ENCODE measurements at regions of chr4 and their contacts with region 1.

Region 1: DNA sequence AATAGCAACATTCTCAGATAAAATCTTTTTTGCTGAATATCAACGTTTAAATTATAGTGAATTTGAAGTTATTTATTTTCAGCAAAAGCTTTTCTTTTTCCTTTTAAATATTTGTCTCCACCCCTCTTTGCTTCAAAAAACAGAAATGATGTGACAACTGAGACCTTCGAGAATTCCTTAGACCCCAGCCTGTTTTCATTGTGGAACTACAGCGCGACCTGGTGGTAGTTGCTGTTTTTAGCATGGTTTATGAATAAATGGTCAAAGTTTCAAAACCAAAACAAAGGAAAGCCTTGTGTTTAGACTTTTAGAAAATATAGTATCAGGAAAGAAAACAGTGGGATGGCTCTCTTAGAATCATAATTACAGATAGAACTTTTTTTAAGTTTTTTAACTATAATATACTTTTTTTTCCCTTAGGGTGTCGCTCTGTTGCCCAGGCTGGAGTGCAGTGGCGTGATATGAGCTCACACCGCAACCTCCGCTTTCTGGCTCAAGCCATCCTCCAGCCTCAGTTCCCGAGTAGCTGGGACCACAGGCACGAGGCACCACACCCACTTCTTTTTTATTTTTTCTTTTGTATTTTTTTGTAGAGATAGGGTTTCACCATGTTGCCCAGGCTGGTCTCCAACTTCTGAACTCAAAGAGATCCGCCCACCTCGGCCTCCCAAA is 26.8 kb upstream of the TMEM184C start:
- DNase-seq: peak; percentile 76
- H3K4me3 Mint-ChIP-seq: no peak overlapping the region
- H3K27ac Mint-ChIP-seq: no peak overlapping the region
- H3K4me1 Mint-ChIP-seq: peaks cover under 1% of the 10 kb centered on the region
- H3K27me3 Mint-ChIP-seq: no peaks in the 10 kb centered on the region
- CTCF ChIP-seq: peak; percentile 81

Region 2: DNA sequence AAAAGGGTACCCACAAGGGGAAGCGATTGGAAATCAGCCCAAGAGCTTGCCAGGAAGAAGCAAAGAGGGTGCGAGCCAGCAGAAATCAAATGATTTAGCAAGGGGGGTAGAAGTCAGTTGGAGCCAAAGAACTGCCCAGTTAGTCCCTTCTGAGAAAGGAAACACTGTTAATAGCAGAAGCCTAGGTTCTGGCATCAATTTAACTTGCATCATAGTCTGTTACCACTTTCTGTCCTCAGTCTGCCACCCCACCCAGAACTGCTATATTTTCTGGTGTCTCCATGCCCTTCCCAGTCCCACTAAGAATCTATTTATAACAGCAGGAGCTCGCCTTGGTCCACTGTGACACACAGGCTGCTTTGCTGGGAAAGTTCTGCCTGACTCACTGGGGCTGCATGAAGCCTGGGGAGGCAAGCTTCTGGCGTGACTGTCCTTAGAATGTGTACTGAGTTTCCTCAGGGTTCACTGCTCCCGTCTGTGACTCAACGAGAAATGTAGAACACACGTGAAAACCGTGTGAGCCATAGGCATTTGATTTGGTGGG is 486.9 kb before region 1 on chr4:
- CTCF ChIA-PET with region 1: interaction called, 10 read pairs
- POLR2A ChIA-PET with region 1: interaction called, 4 read pairs
- intact Hi-C with region 1: loop called (anchors 2 kb)
- DNase-seq: peak; percentile 92
- H3K4me3 Mint-ChIP-seq: peak overlapping the region; percentile 1
- H3K27ac Mint-ChIP-seq: peak overlapping the region; percentile 97
- H3K4me1 Mint-ChIP-seq: peaks cover 18% of the 10 kb centered on the region
- H3K27me3 Mint-ChIP-seq: no peaks in the 10 kb centered on the region
- CTCF ChIP-seq: no peak

Region 3: DNA sequence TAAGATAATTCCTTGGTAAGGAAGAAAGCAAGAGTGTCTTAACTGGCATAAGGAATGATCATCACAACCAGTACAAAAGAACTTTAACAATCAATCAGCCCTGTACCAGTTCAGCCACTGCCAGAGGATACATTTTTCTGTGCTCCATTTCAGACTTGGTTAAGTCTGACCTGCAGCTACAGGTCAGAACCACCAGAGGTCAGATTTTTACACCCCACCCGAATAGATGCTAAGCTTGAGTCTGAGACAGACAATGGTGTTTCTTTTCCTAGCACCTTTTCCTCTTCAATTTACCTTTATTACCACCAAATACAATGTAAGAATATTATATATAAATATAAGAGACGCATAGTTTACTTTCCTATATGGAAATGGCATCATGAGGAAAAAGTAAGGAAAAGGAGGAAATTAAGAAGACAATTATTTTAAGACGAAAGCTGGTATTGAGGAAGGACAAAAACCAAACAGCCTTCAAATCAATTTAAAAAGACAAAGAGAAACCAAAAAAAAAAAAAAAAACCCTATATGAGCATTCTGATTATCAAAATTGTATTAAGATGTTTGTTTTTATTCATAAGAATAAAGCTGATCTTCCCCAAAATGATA is 429.4 kb before region 1 on chr4:
- CTCF ChIA-PET with region 1: interaction called, 67 read pairs
- POLR2A ChIA-PET with region 1: interaction called, 4 read pairs
- intact Hi-C with region 1: loop called (anchors 1 kb)
- DNase-seq: peak; percentile 63
- H3K4me3 Mint-ChIP-seq: no peak overlapping the region
- H3K27ac Mint-ChIP-seq: no peak overlapping the region
- H3K4me1 Mint-ChIP-seq: no peaks in the 10 kb centered on the region
- H3K27me3 Mint-ChIP-seq: no peaks in the 10 kb centered on the region
- CTCF ChIP-seq: peak; percentile 78

Region 4: DNA sequence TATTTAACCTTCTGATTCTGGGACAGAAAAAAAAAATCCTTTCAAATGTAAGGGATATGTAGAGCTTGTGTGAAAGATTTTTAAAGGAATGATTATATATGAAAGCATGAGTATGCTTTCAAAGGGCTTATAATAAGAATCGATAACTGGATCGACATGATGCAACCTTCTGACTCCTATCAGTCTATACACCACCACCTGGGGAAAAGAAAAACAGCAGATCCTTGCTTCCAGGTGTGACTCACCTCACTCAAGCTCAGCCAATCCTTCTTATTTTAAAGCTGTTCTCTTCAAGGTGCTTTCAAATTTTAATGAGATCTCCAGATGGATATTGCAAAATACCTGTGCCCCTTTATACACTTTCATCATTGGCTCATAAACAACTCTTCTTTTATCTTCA is 211.6 kb before region 1 on chr4:
- CTCF ChIA-PET with region 1: interaction called, 11 read pairs
- POLR2A ChIA-PET with region 1: interaction called, 3 read pairs
- intact Hi-C with region 1: loop called (anchors 10 kb)
- DNase-seq: peak; percentile 62
- H3K4me3 Mint-ChIP-seq: no peak overlapping the region
- H3K27ac Mint-ChIP-seq: no peak overlapping the region
- H3K4me1 Mint-ChIP-seq: no peaks in the 10 kb centered on the region
- H3K27me3 Mint-ChIP-seq: no peaks in the 10 kb centered on the region
- CTCF ChIP-seq: peak; percentile 19

Region 5: DNA sequence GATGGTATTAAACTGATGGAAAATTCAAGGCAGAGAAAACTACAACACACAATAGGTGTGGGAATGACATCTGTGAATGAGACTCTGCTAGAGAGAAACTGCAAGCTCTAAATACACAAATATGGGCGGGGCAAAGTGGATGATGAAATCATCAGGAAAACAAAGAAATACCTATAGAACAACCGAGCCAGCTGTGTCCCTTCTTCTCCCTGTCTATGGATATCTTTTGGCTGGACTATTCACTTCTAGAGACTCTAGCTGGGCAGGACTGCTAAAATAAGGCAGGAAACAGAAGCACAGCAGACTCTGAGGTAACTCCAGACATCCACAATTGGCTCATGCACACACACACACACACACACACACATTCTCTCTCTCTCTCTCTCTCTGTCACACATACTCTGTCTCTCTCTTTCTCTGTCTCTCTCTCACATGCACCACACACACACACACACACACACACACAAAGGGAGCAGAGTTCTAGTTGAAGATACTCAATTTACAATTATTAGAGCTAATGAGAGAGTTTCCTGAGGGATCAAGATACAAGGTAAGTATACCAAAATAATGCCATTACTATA is 136.7 kb before region 1 on chr4:
- CTCF ChIA-PET with region 1: no interaction called
- POLR2A ChIA-PET with region 1: no interaction called
- intact Hi-C with region 1: no loop called
- DNase-seq: peak; percentile 72
- H3K4me3 Mint-ChIP-seq: peak overlapping the region; percentile 41
- H3K27ac Mint-ChIP-seq: peak overlapping the region; percentile 90
- H3K4me1 Mint-ChIP-seq: peaks cover 7% of the 10 kb centered on the region
- H3K27me3 Mint-ChIP-seq: no peaks in the 10 kb centered on the region
- CTCF ChIP-seq: no peak

Region 6: DNA sequence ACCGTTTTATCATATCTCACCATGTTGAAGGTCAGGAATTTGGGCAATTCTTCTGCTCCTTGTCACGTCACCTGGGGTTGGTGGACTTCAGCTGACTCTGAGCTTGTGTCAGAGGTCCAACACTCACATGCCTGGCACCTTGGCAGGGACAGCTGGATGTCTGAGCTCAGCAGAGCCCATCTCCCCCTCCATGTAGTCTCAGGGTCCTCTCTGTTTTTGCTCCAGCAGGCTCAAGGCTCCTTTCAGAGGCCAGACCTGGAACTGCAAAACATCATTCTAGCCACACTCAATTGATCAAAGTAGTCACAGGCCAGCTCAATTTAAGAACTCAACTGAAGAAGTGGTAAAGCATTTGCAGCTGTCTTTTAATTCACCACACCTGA is 64.1 kb before region 1 on chr4:
- CTCF ChIA-PET with region 1: interaction called, 16 read pairs
- POLR2A ChIA-PET with region 1: interaction called, 4 read pairs
- intact Hi-C with region 1: no loop called
- DNase-seq: no peak
- H3K4me3 Mint-ChIP-seq: no peak overlapping the region
- H3K27ac Mint-ChIP-seq: no peak overlapping the region
- H3K4me1 Mint-ChIP-seq: peaks cover 6% of the 10 kb centered on the region
- H3K27me3 Mint-ChIP-seq: no peaks in the 10 kb centered on the region
- CTCF ChIP-seq: no peak

Measured in MCF 10A (cell line).